ENCODE measurements at regions of chr12 and their contacts with region 1.

Region 1: GRCh38 chr12:57005980-57006808 is at the start of gene ZBTB39:
- DNase-seq: peak; percentile 63 to 80
- ATAC-seq: peak; percentile 88 to 93 (median 90)
- H3K4me3 ChIP-seq: peak within 1 kb of the TSS; percentile 89
- H3K27ac ChIP-seq: peak within 1 kb of the TSS; percentile 72
- H3K4me1 ChIP-seq: peaks cover 10% of the 10 kb centered on the region
- H3K27me3 ChIP-seq: no peaks in the 10 kb centered on the region
- CTCF ChIP-seq: peak; percentile 62
- total RNA-seq, gene ZBTB39: 3.2 to 5.2 (median 3.6) TPM

Region 2: DNA sequence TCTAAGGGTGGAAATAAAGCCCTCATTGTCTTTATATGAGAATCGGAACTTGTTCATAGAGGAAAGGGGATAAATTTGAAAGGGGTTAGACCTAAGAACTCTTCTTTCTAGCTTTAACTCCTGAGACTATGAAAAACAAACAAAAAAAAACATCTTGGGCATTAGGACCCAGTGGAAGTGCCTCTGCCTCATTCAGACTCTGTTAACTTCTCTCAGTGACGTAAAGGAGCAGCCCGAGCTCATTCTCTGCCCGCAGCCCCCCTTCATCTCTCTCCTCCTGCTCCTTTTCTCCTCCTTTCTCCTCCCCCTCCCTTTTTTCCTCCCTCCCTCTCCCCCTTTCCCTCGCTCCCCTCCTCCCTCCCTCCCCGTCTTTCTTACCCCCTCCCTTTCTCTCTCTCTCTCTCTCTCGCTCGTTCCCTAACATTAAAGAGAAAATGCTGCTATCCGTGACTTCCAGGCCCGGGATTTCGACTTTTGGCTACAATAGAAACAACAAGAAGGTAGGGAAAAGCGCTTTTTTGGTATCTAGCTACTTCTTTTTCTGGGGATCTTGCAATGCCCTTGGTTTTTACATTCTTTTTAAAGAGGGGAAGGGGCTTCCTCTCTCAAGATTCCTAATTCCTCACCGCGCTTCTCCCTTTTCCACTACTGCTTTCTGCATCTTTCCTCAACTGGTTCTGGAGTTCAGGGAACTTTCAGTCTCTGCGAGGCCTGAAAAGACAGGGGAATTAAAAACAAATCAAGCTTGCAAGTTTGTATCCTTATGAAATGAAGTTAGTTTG is 484.4 kb before region 1 on chr12 and contains the start of gene RBMS2:
- intact Hi-C with region 1: loop called in 1 of 2 experiments (anchors 10 kb)
- DNase-seq: peak; percentile 73 to 83
- ATAC-seq: peak; percentile 76 to 95 (median 91)
- H3K4me3 ChIP-seq: peak within 1 kb of the TSS; percentile 71
- H3K27ac ChIP-seq: peak within 1 kb of the TSS; percentile 77
- H3K4me1 ChIP-seq: no peaks in the 10 kb centered on the region
- H3K27me3 ChIP-seq: no peaks in the 10 kb centered on the region
- CTCF ChIP-seq: no peak
- total RNA-seq, gene RBMS2: 11.8 to 20.5 (median 14.8) TPM

Region 3: DNA sequence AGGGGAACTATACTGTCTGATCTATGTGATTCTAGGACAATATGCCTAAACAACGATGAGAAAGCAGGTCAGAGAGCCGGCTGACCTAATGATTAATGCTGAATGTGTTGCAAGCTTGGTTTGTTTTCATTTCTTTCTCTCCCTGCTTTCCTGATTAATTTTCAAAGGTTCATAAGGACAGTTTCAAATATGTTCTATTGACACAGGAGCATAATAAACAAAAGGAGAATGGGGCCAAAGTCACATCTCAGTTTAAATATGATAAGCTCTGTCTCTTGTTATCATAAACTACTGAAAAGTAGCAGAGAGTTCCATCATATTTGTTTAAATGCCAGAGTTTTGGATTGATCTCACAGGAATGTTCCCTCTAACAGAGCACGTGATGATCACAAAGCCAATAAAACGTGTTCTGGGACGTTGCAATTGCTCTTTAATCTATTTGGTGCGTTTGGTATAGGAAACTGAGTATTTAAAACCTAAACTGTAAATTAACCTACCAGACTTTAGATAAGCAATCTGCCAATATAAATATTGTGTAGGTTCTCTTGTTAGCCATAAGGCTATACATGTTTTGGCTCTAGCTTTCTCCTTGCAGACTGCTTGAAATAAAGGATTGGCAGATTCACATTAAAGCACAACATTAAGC is 246.8 kb before region 1 on chr12:
- intact Hi-C with region 1: loop called in 1 of 2 experiments (anchors 5 kb)
- DNase-seq: no peak
- ATAC-seq: no peak
- H3K4me3 ChIP-seq: no peak overlapping the region
- H3K27ac ChIP-seq: no peak overlapping the region
- H3K4me1 ChIP-seq: no peaks in the 10 kb centered on the region
- H3K27me3 ChIP-seq: no peaks in the 10 kb centered on the region
- CTCF ChIP-seq: no peak

Region 4: GRCh38 chr12:56769868-56770267 is 236.3 kb before region 1 on chr12:
- intact Hi-C with region 1: no loop called
- DNase-seq: no peak
- ATAC-seq: no peak
- H3K4me3 ChIP-seq: no peak overlapping the region
- H3K27ac ChIP-seq: no peak overlapping the region
- H3K4me1 ChIP-seq: no peaks in the 10 kb centered on the region
- H3K27me3 ChIP-seq: no peaks in the 10 kb centered on the region
- CTCF ChIP-seq: no peak

Region 5: DNA sequence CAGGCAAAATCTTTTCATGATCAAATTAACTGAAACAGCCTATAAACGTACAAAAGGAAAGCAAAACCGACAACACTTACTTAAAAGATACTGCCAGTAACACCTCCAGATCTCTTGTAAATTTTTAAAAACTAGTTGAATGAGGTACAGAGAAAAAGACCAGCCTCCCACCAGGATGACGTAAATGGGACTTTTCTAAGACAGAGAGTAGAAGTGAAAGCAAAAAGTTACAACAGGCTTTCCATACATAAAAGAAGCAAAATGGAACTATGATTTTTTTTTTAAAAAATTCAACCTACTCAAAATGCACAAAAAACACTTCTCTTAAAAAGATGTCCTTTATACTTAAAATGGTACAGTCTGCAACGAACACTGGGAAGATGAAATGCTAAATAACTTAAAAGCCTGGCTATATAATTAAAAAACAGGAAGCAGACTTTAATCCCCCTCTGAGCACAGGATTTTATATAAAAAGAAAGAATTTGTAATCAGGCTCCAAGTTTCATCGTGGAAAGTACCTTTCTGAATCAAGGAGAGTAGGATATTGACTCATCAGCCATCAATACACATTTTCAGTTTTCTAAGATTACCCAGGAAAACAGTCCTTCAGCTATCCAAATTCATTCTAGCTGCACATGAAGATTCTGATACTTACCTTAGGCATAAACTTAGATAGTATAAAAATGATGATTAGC is 57.9 kb after region 1 on chr12:
- intact Hi-C with region 1: loop called in 1 of 2 experiments (anchors 5 kb)
- DNase-seq: no peak
- ATAC-seq: no peak
- H3K4me3 ChIP-seq: no peak overlapping the region
- H3K27ac ChIP-seq: no peak overlapping the region
- H3K4me1 ChIP-seq: no peaks in the 10 kb centered on the region
- H3K27me3 ChIP-seq: no peaks in the 10 kb centered on the region
- CTCF ChIP-seq: no peak

Region 6: DNA sequence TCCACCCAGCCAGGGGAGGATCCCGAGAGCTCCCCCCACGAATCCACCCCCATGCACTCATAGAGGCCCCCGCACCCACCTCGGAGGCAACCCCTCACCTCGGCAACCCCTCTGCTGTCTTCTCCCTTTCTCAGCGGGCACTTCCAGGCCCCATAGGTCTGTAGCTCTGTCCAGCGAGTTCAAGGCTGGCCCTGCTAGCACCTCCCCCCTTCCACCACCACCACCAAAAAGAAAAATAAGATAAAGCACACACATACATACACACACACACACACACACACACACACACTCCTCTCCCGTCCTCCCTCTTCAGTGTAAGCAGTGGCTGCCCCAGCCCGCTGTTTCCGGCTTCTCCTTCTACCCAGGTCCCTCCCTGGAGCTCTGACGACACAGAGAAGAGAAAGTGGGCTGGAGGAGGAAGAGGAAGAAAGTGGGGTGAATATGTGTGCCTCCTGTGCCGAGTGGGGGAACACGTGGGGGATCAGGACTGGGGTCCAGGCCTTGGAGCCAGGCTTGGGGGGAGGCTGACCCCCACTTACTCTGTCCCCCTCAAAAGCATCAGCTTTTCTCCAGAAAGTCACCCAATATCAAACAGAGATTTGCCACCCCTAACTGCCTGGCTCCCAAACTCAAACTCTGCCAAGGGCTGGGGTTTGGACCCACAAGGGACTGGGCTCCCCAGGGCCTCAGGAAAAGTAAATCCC is 105.0 kb after region 1 on chr12 and contains the start of gene STAT6:
- intact Hi-C with region 1: loop called in 1 of 2 experiments (anchors 5 kb)
- DNase-seq: peak; percentile 72 to 86
- ATAC-seq: peak; percentile 43 to 66 (median 48)
- H3K4me3 ChIP-seq: peak within 1 kb of the TSS; percentile 72
- H3K27ac ChIP-seq: peak within 1 kb of the TSS; percentile 88
- H3K4me1 ChIP-seq: peaks cover 11% of the 10 kb centered on the region
- H3K27me3 ChIP-seq: no peaks in the 10 kb centered on the region
- CTCF ChIP-seq: no peak
- total RNA-seq, gene STAT6: 14.1 to 27.7 (median 18.2) TPM